IMR-90 (cell line): ENCODE measurements at regions of chr2 and their contacts with region 1.

Region 1: DNA sequence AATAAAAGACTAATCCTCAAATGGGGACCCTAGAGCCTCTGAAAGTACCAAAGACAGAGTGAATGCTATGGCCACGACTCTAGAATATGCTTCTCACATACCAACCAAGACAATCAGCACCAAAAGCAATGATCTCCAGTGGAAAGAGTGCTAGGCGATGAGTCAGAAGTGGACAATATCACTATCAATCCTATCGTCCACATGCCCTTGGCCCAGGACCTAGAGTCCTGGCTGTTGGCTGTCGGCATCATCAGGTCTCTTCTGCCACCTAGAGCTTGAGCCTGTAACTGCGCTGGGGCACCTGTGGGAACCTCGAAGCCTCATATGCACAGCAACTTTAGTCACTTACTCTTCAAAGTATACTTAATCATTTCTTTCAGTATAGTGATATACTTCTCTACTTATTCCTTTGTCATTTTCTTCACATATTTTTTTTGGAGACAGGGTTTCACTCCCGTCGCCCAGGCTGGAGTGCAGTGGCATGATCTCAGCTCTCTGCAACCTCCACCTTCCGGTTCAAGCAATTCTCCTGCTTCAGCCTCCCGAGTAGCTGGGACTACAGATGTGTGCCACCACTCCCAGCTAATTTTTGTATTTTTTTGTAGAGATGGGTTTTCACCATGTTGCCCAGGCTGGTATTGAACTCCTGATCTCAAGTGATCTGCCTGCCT is 29.7 kb downstream of the NOL10 start:
- DNase-seq: peak; percentile 90
- ATAC-seq: peak; percentile 98
- H3K4me3 ChIP-seq: no peak overlapping the region
- H3K27ac ChIP-seq: no peak overlapping the region
- H3K4me1 ChIP-seq: peaks cover 6% of the 10 kb centered on the region
- H3K27me3 ChIP-seq: no peaks in the 10 kb centered on the region
- CTCF ChIP-seq: peak; percentile 88
- POLR2A ChIP-seq: 0 out of 2 replicates have a peak, but pooled peaks have one; percentile 27
- RAD21 ChIP-seq: peak; percentile 94

Region 2: GRCh38 chr2:9799665-9800632 is 860.1 kb before region 1 on chr2:
- CTCF ChIA-PET with region 1: no interaction called
- POLR2A ChIA-PET with region 1: no interaction called
- dilution Hi-C with region 1: no loop called
- in situ Hi-C with region 1: loop called (anchors 25 kb)
- intact Hi-C with region 1: no loop called
- DNase-seq: peak; percentile 69
- ATAC-seq: peak; percentile 86
- H3K4me3 ChIP-seq: no peak overlapping the region
- H3K27ac ChIP-seq: no peak overlapping the region
- H3K4me1 ChIP-seq: peaks cover 17% of the 10 kb centered on the region
- H3K27me3 ChIP-seq: no peaks in the 10 kb centered on the region; the same call in 1 of the 2 replicates
- CTCF ChIP-seq: peak; percentile 98
- POLR2A ChIP-seq: no peak
- RAD21 ChIP-seq: peak; percentile 95

Region 3: DNA sequence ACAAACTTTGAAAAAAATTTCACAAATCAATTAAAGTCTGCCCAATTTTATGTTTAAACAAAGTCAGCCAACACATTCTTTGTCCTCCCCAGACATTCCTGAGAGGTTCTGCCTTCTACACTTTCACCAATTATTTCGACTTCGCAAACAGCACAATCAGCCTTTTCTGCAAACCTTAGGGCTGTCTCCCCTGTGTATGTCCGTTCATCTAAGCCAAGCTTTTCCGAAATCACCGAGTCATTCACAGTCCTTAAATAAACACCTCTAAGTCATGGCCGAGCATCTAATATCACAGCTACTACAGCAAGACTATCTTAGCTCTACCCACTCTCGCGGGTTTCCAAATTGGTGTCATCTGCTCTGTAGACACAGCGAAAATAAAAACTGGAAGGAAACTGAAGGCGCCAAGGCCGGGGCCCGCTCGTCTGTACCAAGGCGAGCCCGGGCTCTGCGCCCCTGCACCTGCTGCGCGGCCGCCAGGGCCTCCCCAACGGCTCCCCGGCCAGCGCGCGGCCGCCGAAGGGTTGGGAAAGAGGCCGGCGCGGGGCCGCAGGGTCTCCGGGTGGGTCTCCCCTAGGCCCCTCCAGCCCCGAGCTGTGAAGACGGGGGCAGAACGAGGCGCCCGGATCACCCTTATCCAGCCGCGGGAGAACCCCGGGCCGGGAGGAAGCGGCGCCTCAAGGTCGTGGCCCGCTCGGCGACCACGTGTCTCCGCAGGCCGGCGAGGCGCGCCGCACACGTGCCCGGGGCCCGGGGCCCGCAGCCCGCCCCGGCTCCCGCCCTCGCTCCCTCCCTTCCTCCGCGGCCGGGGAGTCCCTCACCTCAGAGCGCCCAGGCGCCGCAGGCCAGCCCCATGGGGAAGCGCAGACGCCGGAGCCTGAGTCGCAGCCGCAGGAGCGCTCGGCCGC is 212.5 kb before region 1 on chr2:
- CTCF ChIA-PET with region 1: interaction called, 8 read pairs
- POLR2A ChIA-PET with region 1: no interaction called
- dilution Hi-C with region 1: no loop called
- in situ Hi-C with region 1: no loop called
- intact Hi-C with region 1: loop called (anchors 1 kb)
- DNase-seq: peak; percentile 47
- ATAC-seq: peak; percentile 4
- H3K4me3 ChIP-seq: peak overlapping the region; percentile 70
- H3K27ac ChIP-seq: peak overlapping the region; percentile 47; the same call in 1 of the 2 replicates
- H3K4me1 ChIP-seq: peaks cover 10% of the 10 kb centered on the region
- H3K27me3 ChIP-seq: no peaks in the 10 kb centered on the region
- CTCF ChIP-seq: no peak
- POLR2A ChIP-seq: no peak
- RAD21 ChIP-seq: no peak

Region 4: GRCh38 chr2:10457911-10458604 is 202.0 kb before region 1 on chr2:
- CTCF ChIA-PET with region 1: no interaction called
- POLR2A ChIA-PET with region 1: no interaction called
- dilution Hi-C with region 1: no loop called
- in situ Hi-C with region 1: loop called (anchors 5 kb)
- intact Hi-C with region 1: no loop called
- DNase-seq: peak; percentile 73
- ATAC-seq: no peak
- H3K4me3 ChIP-seq: no peak overlapping the region
- H3K27ac ChIP-seq: no peak overlapping the region
- H3K4me1 ChIP-seq: peaks cover 2% of the 10 kb centered on the region
- H3K27me3 ChIP-seq: peaks cover 21% of the 10 kb centered on the region
- CTCF ChIP-seq: no peak
- POLR2A ChIP-seq: no peak
- RAD21 ChIP-seq: no peak

Region 5: GRCh38 chr2:10647886-10648605 is 12.0 kb before region 1 on chr2:
- CTCF ChIA-PET with region 1: no interaction called
- POLR2A ChIA-PET with region 1: no interaction called
- dilution Hi-C with region 1: no loop called
- in situ Hi-C with region 1: no loop called
- intact Hi-C with region 1: no loop called
- DNase-seq: no peak
- ATAC-seq: no peak
- H3K4me3 ChIP-seq: no peak overlapping the region
- H3K27ac ChIP-seq: no peak overlapping the region
- H3K4me1 ChIP-seq: 0 out of 2 replicates have a peak, but pooled peaks cover 2% of the 10 kb centered on the region
- H3K27me3 ChIP-seq: no peaks in the 10 kb centered on the region
- CTCF ChIP-seq: no peak
- POLR2A ChIP-seq: no peak
- RAD21 ChIP-seq: no peak